ENCODE measurements at regions of chr15 and their contacts with region 1.

Region 1: GRCh38 chr15:81274931-81275707 is 48.8 kb downstream of the STARD5 start:
- DNase-seq: peak; percentile 75
- H3K4me3 ChIP-seq: no peak overlapping the region
- H3K27ac ChIP-seq: no peak overlapping the region
- H3K27me3 ChIP-seq: no peaks in the 10 kb centered on the region
- CTCF ChIP-seq: peak; percentile 93

Region 2: DNA sequence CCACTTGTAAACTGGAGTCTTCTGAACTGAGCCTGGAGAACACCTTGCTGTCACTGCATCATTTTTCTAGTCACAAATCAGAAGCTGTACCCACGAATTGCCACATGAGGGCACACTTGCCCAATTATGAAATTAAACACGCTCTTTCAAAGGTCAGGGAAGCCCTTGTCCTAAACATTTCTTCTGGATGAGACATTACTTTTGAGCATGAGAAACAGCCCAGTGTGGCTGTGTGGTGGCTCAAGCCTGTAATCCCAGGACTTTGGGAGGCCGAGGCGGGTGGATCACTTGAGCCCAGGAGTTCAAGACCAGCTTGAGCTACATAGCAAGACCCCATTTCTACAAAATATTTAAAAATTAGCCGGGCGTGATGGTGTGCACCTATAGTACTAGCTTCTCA is 168.6 kb before region 1 on chr15:
- CTCF ChIA-PET with region 1: interaction called, 728 read pairs
- POLR2A ChIA-PET with region 1: no interaction called
- DNase-seq: peak; percentile 63
- H3K4me3 ChIP-seq: no peak overlapping the region
- H3K27ac ChIP-seq: no peak overlapping the region
- H3K27me3 ChIP-seq: peaks cover 13% of the 10 kb centered on the region
- CTCF ChIP-seq: peak; percentile 75

Region 3: DNA sequence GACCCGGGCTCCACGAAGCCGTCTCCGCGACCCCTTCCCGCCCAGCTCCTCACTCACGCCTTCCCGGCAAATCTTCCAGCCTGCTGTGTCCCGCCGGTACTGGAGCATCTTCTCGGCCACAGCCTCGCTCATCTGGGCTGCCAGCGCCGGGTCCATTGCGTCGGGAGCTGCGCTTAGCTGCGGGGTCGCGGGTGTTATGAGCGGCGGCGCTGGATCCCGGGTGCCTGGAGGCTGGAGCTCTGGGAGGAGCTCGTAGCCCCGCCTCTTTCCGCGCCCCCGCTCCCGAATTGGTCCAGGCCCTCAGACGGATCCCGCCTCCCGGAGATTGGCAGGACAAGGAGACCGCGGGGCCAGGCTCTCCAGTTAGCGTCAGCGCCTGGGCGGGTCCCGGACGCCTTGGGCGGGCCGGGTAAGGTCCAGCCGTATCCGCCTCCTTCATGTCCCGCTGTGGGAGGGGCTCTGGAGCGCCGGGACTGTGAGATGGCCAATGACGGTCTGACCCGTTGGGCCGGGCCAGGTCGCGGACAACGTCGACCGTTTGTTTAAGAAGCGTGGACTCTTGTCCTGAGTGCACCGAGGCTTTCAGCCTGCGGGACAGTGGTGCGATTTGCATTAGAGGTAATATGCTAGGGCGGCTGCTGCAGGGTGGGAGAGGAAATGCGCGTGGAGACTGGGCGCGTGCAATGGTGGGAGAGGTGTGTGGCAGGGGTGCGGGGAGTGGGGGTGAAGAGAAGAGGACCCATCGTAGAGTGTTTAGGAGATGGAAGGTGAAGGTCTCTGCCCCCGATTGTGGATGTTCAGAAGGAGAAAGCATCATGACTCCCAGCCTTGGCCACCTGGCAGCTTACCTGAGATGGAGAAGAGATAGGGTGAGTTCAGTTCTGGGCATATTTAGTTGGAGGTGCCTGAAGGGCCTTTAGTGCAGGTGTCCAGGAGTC is 49.1 kb after region 1 on chr15 and contains the start of gene STARD5:
- CTCF ChIA-PET with region 1: interaction called, 11 read pairs
- POLR2A ChIA-PET with region 1: interaction called, 6 read pairs
- DNase-seq: peak; percentile 88
- H3K4me3 ChIP-seq: peak within 1 kb of the TSS; percentile 95
- H3K27ac ChIP-seq: peak within 1 kb of the TSS; percentile 34
- H3K27me3 ChIP-seq: no peaks in the 10 kb centered on the region
- CTCF ChIP-seq: no peak
- polyA plus RNA-seq, gene STARD5: 19.0 and 20.5 TPM in 2 replicates

Region 4: GRCh38 chr15:81357223-81357622 is 82.1 kb after region 1 on chr15:
- CTCF ChIA-PET with region 1: interaction called, 7 read pairs
- POLR2A ChIA-PET with region 1: interaction called, 11 read pairs
- DNase-seq: no peak
- H3K4me3 ChIP-seq: no peak overlapping the region
- H3K27ac ChIP-seq: no peak overlapping the region
- H3K27me3 ChIP-seq: peaks cover 3% of the 10 kb centered on the region
- CTCF ChIP-seq: no peak

Region 5: DNA sequence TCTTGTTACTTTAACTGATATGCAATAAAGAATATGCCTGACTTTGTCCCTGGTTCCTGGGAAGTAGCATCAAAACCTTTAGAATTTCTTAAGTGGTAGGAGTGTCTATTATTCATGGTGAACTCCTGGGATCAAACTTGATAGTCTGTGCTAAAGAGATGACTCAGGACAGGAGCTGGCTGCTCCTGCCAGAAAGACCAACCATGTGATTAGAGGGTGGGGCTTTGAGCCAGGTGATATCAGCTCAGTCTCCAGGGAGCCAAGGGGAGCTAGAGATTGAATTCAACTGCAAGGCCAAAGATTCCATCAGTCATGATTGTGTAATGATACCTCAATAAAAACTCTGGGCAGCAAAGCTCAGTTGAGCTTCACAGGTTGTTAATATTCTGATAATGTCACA is 119.5 kb after region 1 on chr15:
- CTCF ChIA-PET with region 1: interaction called, 163 read pairs
- POLR2A ChIA-PET with region 1: no interaction called
- DNase-seq: no peak
- H3K4me3 ChIP-seq: no peak overlapping the region
- H3K27ac ChIP-seq: no peak overlapping the region
- H3K27me3 ChIP-seq: no peaks in the 10 kb centered on the region
- CTCF ChIP-seq: no peak

Region 6: GRCh38 chr15:81410318-81410753 is 135.2 kb after region 1 on chr15:
- CTCF ChIA-PET with region 1: interaction called, 33 read pairs
- POLR2A ChIA-PET with region 1: no interaction called
- DNase-seq: peak; percentile 37
- H3K4me3 ChIP-seq: no peak overlapping the region
- H3K27ac ChIP-seq: no peak overlapping the region
- H3K27me3 ChIP-seq: peaks cover 17% of the 10 kb centered on the region
- CTCF ChIP-seq: peak; percentile 57